CD4-positive, alpha-beta T cell (primary cell): ENCODE measurements at regions of chrX and their contacts with region 1.

Region 1: GRCh38 chrX:65723706-65724105 is 56.3 kb downstream of the MSN start:
- DNase-seq: peak in 6 of 14 experiments; percentile 12 to 72 (median 56)
- ATAC-seq: peak; percentile 60
- H3K4me3 ChIP-seq: no peak overlapping the region
- H3K4me3 Mint-ChIP-seq: peak overlapping the region; percentile 58
- H3K27ac ChIP-seq: peak overlapping the region; percentile 59 to 64
- H3K27ac Mint-ChIP-seq: peak overlapping the region; percentile 96
- H3K4me1 ChIP-seq: peaks cover 71% of the 10 kb centered on the region
- H3K4me1 Mint-ChIP-seq: peaks cover 88% of the 10 kb centered on the region
- H3K27me3 ChIP-seq: no peaks in the 10 kb centered on the region
- H3K27me3 Mint-ChIP-seq: no peaks in the 10 kb centered on the region
- CTCF ChIP-seq: no peak

Region 2: GRCh38 chrX:65093658-65094057 is 630.0 kb before region 1 on chrX:
- CTCF ChIA-PET with region 1: no interaction called
- POLR2A ChIA-PET with region 1: no interaction called
- intact Hi-C with region 1: no loop called
- DNase-seq: no peak
- ATAC-seq: no peak
- H3K4me3 ChIP-seq: no peak overlapping the region
- H3K4me3 Mint-ChIP-seq: no peak overlapping the region
- H3K27ac ChIP-seq: no peak overlapping the region
- H3K27ac Mint-ChIP-seq: no peak overlapping the region
- H3K4me1 ChIP-seq: no peaks in the 10 kb centered on the region
- H3K4me1 Mint-ChIP-seq: no peaks in the 10 kb centered on the region
- H3K27me3 ChIP-seq: no peaks in the 10 kb centered on the region
- H3K27me3 Mint-ChIP-seq: no peaks in the 10 kb centered on the region
- CTCF ChIP-seq: no peak

Region 3: GRCh38 chrX:65667503-65668376 is 56.0 kb before region 1 on chrX and contains the start of gene MSN:
- CTCF ChIA-PET with region 1: no interaction called
- POLR2A ChIA-PET with region 1: interaction called, 4 read pairs
- intact Hi-C with region 1: loop called (anchors 2 to 5 kb)
- DNase-seq: peak; percentile 49 to 86 (median 66)
- ATAC-seq: peak; percentile 74
- H3K4me3 ChIP-seq: peak within 1 kb of the TSS; percentile 73
- H3K4me3 Mint-ChIP-seq: peak within 1 kb of the TSS; percentile 99
- H3K27ac ChIP-seq: peak within 1 kb of the TSS; percentile 72 to 84
- H3K27ac Mint-ChIP-seq: peak within 1 kb of the TSS; percentile 93
- H3K4me1 ChIP-seq: peaks cover 24% of the 10 kb centered on the region
- H3K4me1 Mint-ChIP-seq: peaks cover 48% of the 10 kb centered on the region
- H3K27me3 ChIP-seq: no peaks in the 10 kb centered on the region
- H3K27me3 Mint-ChIP-seq: no peaks in the 10 kb centered on the region
- CTCF ChIP-seq: no peak
- total RNA-seq, gene MSN: 268 to 273 TPM

Region 4: GRCh38 chrX:65688403-65688871 is 35.3 kb before region 1 on chrX:
- CTCF ChIA-PET with region 1: no interaction called
- POLR2A ChIA-PET with region 1: interaction called, 3 read pairs
- intact Hi-C with region 1: loop called in 1 of 2 experiments (anchors 5 kb)
- DNase-seq: no peak
- ATAC-seq: no peak
- H3K4me3 ChIP-seq: no peak overlapping the region
- H3K4me3 Mint-ChIP-seq: peak overlapping the region; percentile 21
- H3K27ac ChIP-seq: peak overlapping the region; percentile 18 to 39
- H3K27ac Mint-ChIP-seq: peak overlapping the region; percentile 94
- H3K4me1 ChIP-seq: peaks cover 91% of the 10 kb centered on the region
- H3K4me1 Mint-ChIP-seq: peaks cover 88% of the 10 kb centered on the region
- H3K27me3 ChIP-seq: no peaks in the 10 kb centered on the region
- H3K27me3 Mint-ChIP-seq: no peaks in the 10 kb centered on the region
- CTCF ChIP-seq: no peak

Region 5: DNA sequence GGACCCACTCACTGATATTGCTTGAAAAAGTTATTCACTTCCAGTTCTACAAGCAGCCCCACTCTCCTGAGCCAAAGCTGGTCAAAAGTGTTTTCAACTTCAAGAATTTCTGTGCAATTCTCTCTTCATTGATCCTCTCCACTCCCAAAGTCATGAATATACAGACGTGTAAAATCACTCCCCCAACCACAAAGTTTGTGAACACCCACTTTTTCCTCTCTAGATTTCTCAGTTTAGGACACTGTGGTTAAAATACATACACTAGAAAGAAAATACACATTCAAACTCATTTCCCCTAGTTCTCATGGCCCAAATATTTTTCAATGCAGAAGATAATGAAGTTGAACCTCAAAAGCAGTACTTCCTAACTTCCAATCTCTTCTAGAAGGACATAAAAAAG is 60.0 kb after region 1 on chrX:
- CTCF ChIA-PET with region 1: no interaction called
- POLR2A ChIA-PET with region 1: no interaction called
- intact Hi-C with region 1: no loop called
- DNase-seq: no peak
- ATAC-seq: no peak
- H3K4me3 ChIP-seq: no peak overlapping the region
- H3K4me3 Mint-ChIP-seq: no peak overlapping the region
- H3K27ac ChIP-seq: no peak overlapping the region
- H3K27ac Mint-ChIP-seq: no peak overlapping the region
- H3K4me1 ChIP-seq: no peaks in the 10 kb centered on the region
- H3K4me1 Mint-ChIP-seq: peaks cover 8% of the 10 kb centered on the region
- H3K27me3 ChIP-seq: no peaks in the 10 kb centered on the region
- H3K27me3 Mint-ChIP-seq: no peaks in the 10 kb centered on the region
- CTCF ChIP-seq: no peak

Region 6: DNA sequence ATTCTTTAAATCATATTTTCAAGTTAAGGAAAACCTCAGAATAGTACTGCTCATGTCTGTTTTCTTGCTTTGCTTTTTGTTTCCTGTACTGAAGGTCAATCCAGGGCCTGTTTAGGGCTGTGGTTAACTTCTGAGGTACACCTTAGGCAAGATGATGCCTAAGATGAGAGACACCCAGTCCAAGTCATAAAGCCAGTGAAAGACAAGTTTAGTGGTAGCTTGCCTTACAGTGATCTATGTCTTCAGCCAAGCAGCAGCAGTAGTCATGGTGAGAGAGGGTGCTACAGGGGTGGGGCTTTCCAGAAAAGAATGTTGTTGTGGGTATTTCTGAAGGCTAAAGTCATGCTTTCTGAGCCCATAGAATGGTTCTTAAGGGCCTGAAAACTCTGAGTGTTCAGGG is 142.4 kb after region 1 on chrX:
- CTCF ChIA-PET with region 1: no interaction called
- POLR2A ChIA-PET with region 1: no interaction called
- intact Hi-C with region 1: loop called in 1 of 2 experiments (anchors 10 kb)
- DNase-seq: peak in 5 of 14 experiments; percentile 8 to 63 (median 50)
- ATAC-seq: peak; percentile 85
- H3K4me3 ChIP-seq: no peak overlapping the region
- H3K4me3 Mint-ChIP-seq: no peak overlapping the region
- H3K27ac ChIP-seq: peak overlapping the region in 1 of 2 donors; percentile 30
- H3K27ac Mint-ChIP-seq: peak overlapping the region; percentile 47
- H3K4me1 ChIP-seq: peaks cover 20% of the 10 kb centered on the region
- H3K4me1 Mint-ChIP-seq: peaks cover 47% of the 10 kb centered on the region
- H3K27me3 ChIP-seq: no peaks in the 10 kb centered on the region
- H3K27me3 Mint-ChIP-seq: no peaks in the 10 kb centered on the region
- CTCF ChIP-seq: no peak